CD4-positive, alpha-beta T cell (primary cell): ENCODE measurements at regions of chr11 and their contacts with region 1.

Region 1: DNA sequence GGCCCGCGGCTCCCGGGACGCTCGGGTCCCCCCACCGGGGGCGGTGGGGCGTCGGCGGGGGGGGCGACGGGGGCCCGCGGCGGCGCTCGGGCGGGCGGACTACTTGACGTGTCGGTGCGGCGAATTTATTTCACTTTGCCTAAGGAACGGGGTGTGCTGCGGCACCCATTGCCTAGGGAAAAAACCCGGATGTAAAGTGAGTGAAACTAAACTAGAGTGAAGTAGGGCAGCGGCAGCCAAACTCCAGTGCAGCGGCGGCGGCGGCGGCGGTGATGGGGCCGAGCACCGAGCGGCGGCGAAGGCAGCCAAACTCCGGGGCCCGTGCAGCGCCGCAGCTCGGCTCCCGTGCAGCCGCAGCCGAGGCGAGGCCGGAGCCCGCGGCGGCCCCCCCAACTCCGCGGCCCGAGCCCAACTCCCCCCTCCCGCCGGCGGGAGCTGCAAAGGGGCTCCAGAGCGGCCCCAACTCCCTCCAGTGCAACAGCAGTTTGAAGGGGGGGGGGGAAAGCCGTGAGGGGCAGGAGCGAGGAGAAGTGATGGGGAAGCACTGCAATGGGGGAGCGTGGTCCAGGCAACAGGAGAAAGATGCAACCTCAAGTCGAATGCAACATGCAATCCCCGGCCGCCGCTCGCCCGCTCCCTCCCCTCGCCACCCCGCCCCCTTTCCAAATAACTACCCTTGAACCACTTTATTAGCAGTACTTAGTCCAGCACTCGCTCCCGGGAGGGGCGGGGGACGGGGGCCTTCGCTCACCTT is 647 bp upstream of the PHF21A start:
- DNase-seq: peak; percentile 50 to 92 (median 68)
- ATAC-seq: peak; percentile 53
- H3K4me3 ChIP-seq: peak overlapping the region; percentile 72
- H3K4me3 Mint-ChIP-seq: peak overlapping the region; percentile 95
- H3K27ac ChIP-seq: peak overlapping the region in 1 of 2 donors; percentile 53
- H3K27ac Mint-ChIP-seq: peak overlapping the region; percentile 85
- H3K4me1 ChIP-seq: peaks cover 10% of the 10 kb centered on the region
- H3K4me1 Mint-ChIP-seq: peaks cover 34% of the 10 kb centered on the region
- H3K27me3 ChIP-seq: no peaks in the 10 kb centered on the region
- H3K27me3 Mint-ChIP-seq: peaks cover 4% of the 10 kb centered on the region
- CTCF ChIP-seq: no peak

Region 2: GRCh38 chr11:45846974-45847910 is 274.7 kb before region 1 on chr11 and contains the start of gene CRY2:
- CTCF ChIA-PET with region 1: no interaction called
- POLR2A ChIA-PET with region 1: interaction called, 3 read pairs
- intact Hi-C with region 1: loop called in 1 of 2 experiments (anchors 5 kb)
- DNase-seq: peak; percentile 95 to 99 (median 98)
- ATAC-seq: peak; percentile 77
- H3K4me3 ChIP-seq: peak within 1 kb of the TSS; percentile 94
- H3K4me3 Mint-ChIP-seq: peak within 1 kb of the TSS; percentile 96
- H3K27ac ChIP-seq: peak within 1 kb of the TSS; percentile 91 to 93
- H3K27ac Mint-ChIP-seq: peak within 1 kb of the TSS; percentile 100
- H3K4me1 ChIP-seq: peaks cover 41% of the 10 kb centered on the region
- H3K4me1 Mint-ChIP-seq: peaks cover 70% of the 10 kb centered on the region
- H3K27me3 ChIP-seq: no peaks in the 10 kb centered on the region
- H3K27me3 Mint-ChIP-seq: no peaks in the 10 kb centered on the region
- CTCF ChIP-seq: no peak
- total RNA-seq, gene CRY2: 248 TPM

Region 3: DNA sequence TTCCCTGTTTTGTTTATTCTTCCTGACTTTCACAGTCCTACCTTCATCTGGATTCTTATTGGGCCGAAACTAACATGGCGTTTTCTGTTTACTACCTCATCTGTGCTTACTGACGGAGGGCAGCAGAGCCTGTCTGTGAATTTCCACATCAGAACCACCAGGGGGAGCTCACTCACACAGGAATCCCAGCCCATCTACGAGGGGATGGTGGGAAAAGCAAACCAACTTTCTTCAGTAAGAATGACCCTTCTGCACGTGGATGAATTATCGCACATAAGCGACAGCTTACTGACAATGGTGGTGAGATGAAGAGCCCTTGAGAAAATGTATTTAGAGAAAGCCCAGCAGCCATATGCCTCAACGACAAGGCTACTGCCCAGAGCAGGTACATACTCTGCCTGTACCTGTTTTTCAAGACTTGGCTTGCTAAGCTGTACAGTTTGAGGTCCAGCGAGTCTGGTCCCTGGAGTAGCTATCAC is 157.0 kb before region 1 on chr11:
- CTCF ChIA-PET with region 1: no interaction called
- POLR2A ChIA-PET with region 1: no interaction called
- intact Hi-C with region 1: loop called in 1 of 2 experiments (anchors 5 kb)
- DNase-seq: peak; percentile 27 to 87 (median 44)
- ATAC-seq: peak; percentile 98
- H3K4me3 ChIP-seq: no peak overlapping the region
- H3K4me3 Mint-ChIP-seq: no peak overlapping the region
- H3K27ac ChIP-seq: no peak overlapping the region
- H3K27ac Mint-ChIP-seq: no peak overlapping the region
- H3K4me1 ChIP-seq: peaks cover 5% of the 10 kb centered on the region
- H3K4me1 Mint-ChIP-seq: no peaks in the 10 kb centered on the region
- H3K27me3 ChIP-seq: no peaks in the 10 kb centered on the region
- H3K27me3 Mint-ChIP-seq: no peaks in the 10 kb centered on the region
- CTCF ChIP-seq: peak; percentile 96

Region 4: DNA sequence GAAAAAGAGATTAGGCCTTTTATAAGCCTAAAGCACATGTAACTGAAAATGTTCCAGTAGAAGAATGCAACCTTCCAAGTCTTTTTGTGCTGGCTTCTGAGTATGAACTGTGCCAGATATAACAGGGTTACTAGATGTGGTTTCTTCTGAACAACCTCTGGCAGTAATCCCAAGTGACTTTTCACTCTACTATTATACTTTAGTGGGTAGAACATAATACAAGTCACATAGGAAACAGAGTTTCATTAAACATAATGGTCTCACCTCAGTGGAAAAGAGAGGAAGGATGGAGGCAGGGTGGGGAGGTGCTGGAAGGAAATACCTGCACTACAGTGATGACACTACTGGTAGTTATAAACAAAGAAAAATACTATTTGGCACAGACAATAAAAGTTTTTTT is 81.9 kb before region 1 on chr11:
- CTCF ChIA-PET with region 1: no interaction called
- POLR2A ChIA-PET with region 1: no interaction called
- intact Hi-C with region 1: no loop called
- DNase-seq: no peak
- ATAC-seq: no peak
- H3K4me3 ChIP-seq: no peak overlapping the region
- H3K4me3 Mint-ChIP-seq: no peak overlapping the region
- H3K27ac ChIP-seq: no peak overlapping the region
- H3K27ac Mint-ChIP-seq: no peak overlapping the region
- H3K4me1 ChIP-seq: no peaks in the 10 kb centered on the region
- H3K4me1 Mint-ChIP-seq: peaks cover 35% of the 10 kb centered on the region
- H3K27me3 ChIP-seq: no peaks in the 10 kb centered on the region
- H3K27me3 Mint-ChIP-seq: no peaks in the 10 kb centered on the region
- CTCF ChIP-seq: no peak

Region 5: GRCh38 chr11:46106530-46107407 is 15.1 kb before region 1 on chr11:
- CTCF ChIA-PET with region 1: interaction called, 11 read pairs
- POLR2A ChIA-PET with region 1: interaction called, 5 read pairs
- intact Hi-C with region 1: loop called in 1 of 2 experiments (anchors 2 kb)
- DNase-seq: no peak
- ATAC-seq: no peak
- H3K4me3 ChIP-seq: no peak overlapping the region
- H3K4me3 Mint-ChIP-seq: no peak overlapping the region
- H3K27ac ChIP-seq: no peak overlapping the region
- H3K27ac Mint-ChIP-seq: no peak overlapping the region
- H3K4me1 ChIP-seq: no peaks in the 10 kb centered on the region
- H3K4me1 Mint-ChIP-seq: peaks cover 42% of the 10 kb centered on the region
- H3K27me3 ChIP-seq: no peaks in the 10 kb centered on the region
- H3K27me3 Mint-ChIP-seq: no peaks in the 10 kb centered on the region
- CTCF ChIP-seq: no peak

Region 6: DNA sequence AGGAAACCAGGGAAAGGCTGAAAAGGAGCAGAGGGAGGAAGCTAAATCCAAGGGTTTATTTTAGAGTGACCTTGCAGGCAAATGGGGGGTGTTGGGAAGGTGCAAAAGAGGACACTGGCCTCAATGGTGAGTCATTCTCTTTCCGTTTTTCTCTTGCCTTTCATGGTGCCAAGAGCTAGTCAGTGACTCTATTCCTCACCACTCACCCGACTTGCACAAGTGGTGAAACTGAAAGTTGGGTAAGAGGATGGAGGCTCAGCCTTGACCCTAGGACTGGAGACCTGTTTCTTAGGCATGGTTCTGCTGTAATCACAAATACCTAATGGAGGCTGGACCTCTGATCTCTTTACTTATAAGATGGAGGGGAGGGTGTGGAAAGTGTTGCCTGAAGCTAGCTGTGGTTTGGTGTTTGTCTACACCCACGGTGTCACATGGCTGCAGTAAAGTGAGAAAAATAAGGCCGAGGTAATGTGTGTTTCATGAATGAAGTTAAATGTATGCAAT is 88.3 kb after region 1 on chr11:
- CTCF ChIA-PET with region 1: no interaction called
- POLR2A ChIA-PET with region 1: no interaction called
- intact Hi-C with region 1: no loop called
- DNase-seq: peak in 3 of 14 experiments; percentile 23 to 63 (median 31)
- ATAC-seq: no peak
- H3K4me3 ChIP-seq: no peak overlapping the region
- H3K4me3 Mint-ChIP-seq: no peak overlapping the region
- H3K27ac ChIP-seq: no peak overlapping the region
- H3K27ac Mint-ChIP-seq: no peak overlapping the region
- H3K4me1 ChIP-seq: no peaks in the 10 kb centered on the region
- H3K4me1 Mint-ChIP-seq: peaks cover 11% of the 10 kb centered on the region
- H3K27me3 ChIP-seq: no peaks in the 10 kb centered on the region
- H3K27me3 Mint-ChIP-seq: peaks cover 24% of the 10 kb centered on the region
- CTCF ChIP-seq: no peak

Region 7: GRCh38 chr11:46308631-46309419 is 186.9 kb after region 1 on chr11:
- CTCF ChIA-PET with region 1: no interaction called
- POLR2A ChIA-PET with region 1: no interaction called
- intact Hi-C with region 1: loop called in 1 of 2 experiments (anchors 10 kb)
- DNase-seq: peak; percentile 40 to 79 (median 56)
- ATAC-seq: peak; percentile 87
- H3K4me3 ChIP-seq: no peak overlapping the region
- H3K4me3 Mint-ChIP-seq: no peak overlapping the region
- H3K27ac ChIP-seq: no peak overlapping the region
- H3K27ac Mint-ChIP-seq: no peak overlapping the region
- H3K4me1 ChIP-seq: peaks cover 9% of the 10 kb centered on the region
- H3K4me1 Mint-ChIP-seq: peaks cover 5% of the 10 kb centered on the region
- H3K27me3 ChIP-seq: no peaks in the 10 kb centered on the region
- H3K27me3 Mint-ChIP-seq: no peaks in the 10 kb centered on the region
- CTCF ChIP-seq: peak; percentile 84

Region 8: GRCh38 chr11:46693597-46694012 is 571.7 kb after region 1 on chr11:
- CTCF ChIA-PET with region 1: no interaction called
- POLR2A ChIA-PET with region 1: no interaction called
- intact Hi-C with region 1: loop called in 1 of 2 experiments (anchors 10 kb)
- DNase-seq: no peak
- ATAC-seq: no peak
- H3K4me3 ChIP-seq: no peak overlapping the region
- H3K4me3 Mint-ChIP-seq: no peak overlapping the region
- H3K27ac ChIP-seq: no peak overlapping the region
- H3K27ac Mint-ChIP-seq: no peak overlapping the region
- H3K4me1 ChIP-seq: peaks cover 44% of the 10 kb centered on the region
- H3K4me1 Mint-ChIP-seq: peaks cover 20% of the 10 kb centered on the region
- H3K27me3 ChIP-seq: no peaks in the 10 kb centered on the region
- H3K27me3 Mint-ChIP-seq: no peaks in the 10 kb centered on the region
- CTCF ChIP-seq: no peak